Posterior cingulate gyrus (tissue), 11 donors: ENCODE measurements at regions of chr16 and their contacts with region 1.

Region 1: GRCh38 chr16:61654962-61655361 is 381.3 kb downstream of the CDH8 start:
- DNase-seq: peak in 3 of 10 donors; percentile 3 to 70 (median 39)

Region 2: DNA sequence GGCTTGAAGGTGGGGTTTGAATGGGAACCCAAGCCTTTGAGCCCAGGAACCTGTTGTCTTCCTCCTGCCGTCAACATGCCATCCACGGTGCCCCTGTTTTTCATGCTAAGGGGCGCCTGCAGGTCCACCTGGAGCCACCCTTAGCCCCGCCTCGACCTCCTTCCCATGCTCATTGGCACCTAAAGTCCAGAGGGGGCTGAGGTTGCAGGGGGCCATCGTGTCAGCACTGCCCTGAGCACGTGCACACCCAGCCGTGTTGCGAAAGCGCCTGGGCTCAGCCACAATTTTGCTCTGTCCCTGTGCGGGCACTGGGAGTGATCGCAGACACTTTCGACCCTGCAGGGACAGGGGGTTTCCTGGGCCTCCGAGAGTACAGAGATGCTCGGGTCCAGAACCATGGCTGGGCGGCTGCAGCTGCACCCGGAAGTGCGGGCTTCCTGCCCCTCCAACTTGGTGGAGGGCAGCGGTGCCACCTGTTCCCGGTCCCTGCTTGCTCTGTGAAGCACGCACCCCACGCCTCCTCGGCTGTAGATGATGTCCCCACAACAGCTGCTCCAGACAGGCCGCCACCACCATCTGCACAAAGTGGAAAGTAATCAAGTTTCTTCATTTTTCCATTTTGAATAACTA is 73.4 kb before region 1 on chr16:
- intact Hi-C with region 1: no loop called
- DNase-seq: peak in 3 of 10 donors; percentile 67 to 82 (median 81)

Region 3: GRCh38 chr16:62041401-62041800 is 386.4 kb after region 1 on chr16:
- intact Hi-C with region 1: loop called (anchors 1 kb)
- DNase-seq: peak in 6 of 10 donors; percentile 39 to 87 (median 55)

Region 4: DNA sequence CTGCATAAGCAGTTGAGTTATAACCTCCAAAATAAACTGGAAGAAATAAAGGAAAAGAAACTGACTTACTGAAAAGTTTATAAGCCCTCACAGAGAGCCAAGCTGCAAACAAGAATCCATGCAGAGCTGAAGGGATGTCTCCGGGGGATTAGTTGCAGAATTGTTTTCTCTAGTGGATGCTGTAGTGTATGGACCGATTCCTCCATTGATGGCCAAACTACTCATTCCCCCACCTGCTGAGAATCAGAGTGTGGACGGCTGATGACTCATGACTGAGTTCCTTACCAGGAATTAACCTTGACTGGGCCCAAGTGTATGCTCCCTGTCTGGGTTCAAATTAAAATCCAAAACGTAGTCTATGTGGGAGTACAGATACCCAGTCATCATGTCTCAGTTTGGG is 475.1 kb after region 1 on chr16:
- intact Hi-C with region 1: loop called (anchors 5 kb)
- DNase-seq: no peak